Sciatic nerve (tissue), 2 donors: ENCODE measurements at regions of chr4 and their contacts with region 1.

Region 1: DNA sequence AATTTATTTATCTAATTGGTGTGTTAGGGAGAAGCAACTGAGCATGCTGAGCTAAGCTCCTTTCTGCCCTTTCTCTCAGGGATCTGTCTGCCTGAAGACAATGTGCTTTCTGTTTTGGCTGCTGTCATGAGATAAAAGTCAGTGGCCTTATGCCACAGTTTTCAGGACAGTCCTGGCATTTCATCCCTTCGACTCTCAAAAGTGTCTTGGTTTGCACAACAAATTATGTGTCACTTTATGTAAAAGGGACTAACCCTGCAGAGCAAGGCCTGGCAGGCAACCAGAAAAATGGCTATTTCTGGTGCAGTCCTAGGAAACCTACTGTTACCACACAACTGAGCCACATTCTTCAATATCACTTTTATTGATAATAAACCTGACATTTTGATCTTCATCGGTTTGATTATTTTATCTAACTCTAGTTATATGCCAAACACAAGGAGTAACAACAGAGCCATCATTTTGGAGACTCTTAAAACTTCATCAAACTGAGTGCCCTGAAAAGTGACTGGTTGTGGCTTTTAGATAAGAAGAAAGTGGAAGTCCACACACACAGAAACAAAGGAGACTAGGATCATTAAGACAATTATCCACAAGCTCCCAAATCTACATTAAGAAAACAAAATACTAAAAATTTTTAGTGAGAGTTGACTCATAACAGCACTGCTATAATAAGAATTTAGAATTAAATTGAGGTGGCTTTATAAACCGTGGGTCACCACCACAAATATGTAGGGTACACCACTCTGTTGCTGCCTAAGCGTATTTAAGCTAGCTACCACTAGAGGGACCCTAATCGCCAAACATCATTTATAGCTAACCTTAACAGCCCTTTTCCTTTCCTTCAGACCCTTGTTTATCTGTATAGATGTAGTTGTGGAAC is 95.9 kb upstream of the PTPN13 start:
- DNase-seq: no peak
- ATAC-seq: peak; percentile 89

Region 2: DNA sequence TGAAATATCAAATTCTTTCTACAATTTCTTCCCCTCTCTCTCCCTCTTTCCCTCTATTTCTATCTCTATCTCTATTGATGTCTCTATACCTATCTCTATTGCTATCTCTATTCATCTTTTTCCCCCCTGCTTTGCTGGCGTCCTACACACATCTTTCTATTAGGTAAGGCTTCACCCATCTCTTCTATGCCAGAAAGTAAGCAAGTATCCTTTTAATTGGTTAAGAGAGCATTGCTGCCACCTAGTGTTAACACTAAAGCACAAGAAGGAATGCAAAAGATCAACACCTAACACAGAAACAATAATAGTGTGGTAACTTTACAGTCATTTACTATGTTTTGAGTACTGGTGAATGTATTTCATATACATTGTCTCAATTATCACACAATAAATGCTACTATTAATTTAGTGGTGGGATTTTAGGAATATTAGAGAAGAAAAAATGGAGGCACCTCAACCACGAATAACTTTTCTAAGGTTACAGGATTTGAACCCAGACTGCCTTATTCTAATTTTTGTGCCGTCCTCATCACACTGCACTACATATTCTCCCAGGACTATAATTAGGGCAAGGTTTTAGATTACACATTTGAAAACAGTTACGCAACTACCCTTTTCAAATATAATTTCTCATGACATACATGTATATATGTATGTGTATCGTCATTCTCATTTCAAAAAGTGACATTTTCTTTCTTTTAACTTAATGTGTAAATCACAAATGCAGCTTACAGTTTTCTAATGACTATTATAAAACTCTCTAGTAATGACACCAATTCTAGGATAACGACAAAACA is 397.7 kb after region 1 on chr4:
- intact Hi-C with region 1: loop called (anchors 2 kb)
- DNase-seq: no peak
- ATAC-seq: peak; percentile 55